ENCODE measurements at regions of chr12 and their contacts with region 1.

Region 1: DNA sequence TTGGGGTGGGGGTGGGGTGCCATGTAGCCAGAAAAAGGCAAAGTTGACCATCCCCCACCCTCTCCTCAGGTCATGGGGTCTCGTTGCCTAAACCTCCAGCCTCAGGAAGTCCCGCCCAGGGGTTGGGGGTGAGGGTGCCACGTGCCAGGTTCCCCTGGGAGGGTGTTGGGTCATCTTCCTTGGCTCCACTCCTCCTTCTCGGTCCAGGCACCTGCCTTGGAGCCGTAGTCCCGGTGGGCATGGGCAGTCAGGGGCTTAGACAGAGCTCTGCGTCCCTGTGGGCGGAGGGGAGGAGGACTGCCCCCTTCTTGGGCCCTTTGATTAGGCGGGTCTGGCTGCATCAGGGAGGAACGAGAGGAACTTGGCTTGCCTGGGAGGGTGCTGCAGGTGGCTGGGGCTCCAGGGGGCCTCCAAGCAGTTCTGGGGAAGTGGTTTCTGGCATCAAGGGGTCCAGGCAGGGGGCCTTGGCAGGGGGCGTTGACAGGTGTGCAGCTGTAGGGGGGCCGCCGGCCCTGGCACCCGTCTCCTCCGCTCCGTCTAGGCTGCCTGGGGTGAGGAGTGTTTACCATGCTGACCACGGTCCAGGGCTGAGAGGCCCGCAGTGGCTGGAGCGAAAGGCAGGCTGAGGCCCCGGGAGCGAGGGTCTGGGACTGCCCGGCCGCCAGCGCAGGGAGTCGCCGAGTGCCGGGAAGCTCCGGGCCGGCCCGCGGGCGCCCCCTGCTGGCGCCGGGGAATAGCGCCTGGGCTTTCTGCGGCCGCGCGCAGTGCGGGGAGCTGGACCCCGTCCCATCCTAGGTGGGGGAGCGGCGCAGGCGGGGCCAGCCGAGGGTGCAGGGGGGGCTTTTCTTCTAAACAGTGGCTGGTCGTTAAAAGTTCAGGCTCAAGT is 7.9 kb downstream of the SETD1B start:
- DNase-seq: peak; percentile 67 to 79
- ATAC-seq: peak; percentile 86 to 94 (median 90)
- H3K4me3 ChIP-seq: peak overlapping the region; percentile 31 to 68 (median 60)
- H3K27ac ChIP-seq: peak overlapping the region in 9 of 10 donors; percentile 38 to 82 (median 63)
- H3K4me1 ChIP-seq: peaks cover 18 to 56% (median 48%) of the 10 kb centered on the region in 9 donors
- H3K27me3 ChIP-seq: no peaks in the 10 kb centered on the region
- CTCF ChIP-seq: peak in 8 of 9 donors; percentile 97 to 99 (median 99)

Region 2: DNA sequence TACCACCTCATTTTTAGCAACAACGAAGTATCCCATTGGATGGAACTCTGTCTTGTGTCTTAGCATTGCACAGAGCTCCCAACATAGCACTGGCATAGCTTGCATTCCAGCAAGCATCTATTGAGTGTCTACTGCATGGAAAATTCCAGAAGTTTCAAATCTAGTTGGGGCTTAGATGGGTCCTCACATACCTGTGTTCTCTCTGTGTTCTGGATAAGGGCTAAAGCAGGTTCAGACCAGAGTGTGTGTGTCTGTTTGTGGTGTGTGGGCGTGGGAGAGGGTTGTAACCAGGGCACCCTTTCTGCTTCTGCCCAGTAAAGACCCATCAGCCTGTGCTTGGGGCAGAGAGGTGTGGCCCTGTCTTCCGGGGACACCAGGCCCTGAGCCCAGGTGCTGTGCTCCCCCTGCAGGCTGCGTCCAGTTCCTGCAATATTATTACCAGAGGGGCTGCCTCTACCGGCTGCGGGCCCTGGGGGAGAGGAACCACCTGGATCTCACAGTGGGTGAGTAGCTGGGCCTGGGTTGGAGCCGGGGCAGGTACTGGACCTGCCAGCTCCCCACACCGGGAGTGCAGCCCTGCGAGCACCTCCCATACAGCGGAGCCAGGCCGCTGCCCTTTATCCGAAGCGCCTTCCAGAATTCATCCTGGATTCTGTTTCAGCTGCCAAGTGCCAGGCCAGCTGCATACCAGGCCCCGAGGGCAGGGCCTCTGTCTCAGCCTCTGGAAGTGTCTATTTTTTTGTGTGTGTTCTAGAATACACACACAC is 38.5 kb before region 1 on chr12:
- intact Hi-C with region 1: loop called in 2 of 10 experiments (anchors 5 kb)
- DNase-seq: peak; percentile 64 to 70
- ATAC-seq: peak; percentile 56 to 78 (median 68)
- H3K4me3 ChIP-seq: peak overlapping the region in 1 of 10 donors; percentile 11
- H3K27ac ChIP-seq: peak overlapping the region in 9 of 10 donors; percentile 31 to 80 (median 72)
- H3K4me1 ChIP-seq: peaks cover 4 to 68% (median 29%) of the 10 kb centered on the region in 9 donors
- H3K27me3 ChIP-seq: no peaks in the 10 kb centered on the region
- CTCF ChIP-seq: peak; percentile 54 to 87 (median 79)

Region 3: GRCh38 chr12:121793838-121794533 is 17.7 kb before region 1 on chr12:
- intact Hi-C with region 1: loop called in 9 of 10 experiments (anchors 1 to 2 kb)
- DNase-seq: peak; percentile 90 to 92
- ATAC-seq: peak; percentile 60 to 79 (median 68)
- H3K4me3 ChIP-seq: peak overlapping the region; percentile 32 to 72 (median 58)
- H3K27ac ChIP-seq: peak overlapping the region in 9 of 10 donors; percentile 68 to 100 (median 100)
- H3K4me1 ChIP-seq: peaks cover 41 to 87% (median 76%) of the 10 kb centered on the region in 9 donors
- H3K27me3 ChIP-seq: no peaks in the 10 kb centered on the region
- CTCF ChIP-seq: peak; percentile 99 to 100 (median 100)

Region 4: GRCh38 chr12:121888478-121889266 is 77.0 kb after region 1 on chr12 and contains the start of gene PSMD9:
- intact Hi-C with region 1: loop called in 2 of 10 experiments (anchors 5 to 10 kb)
- DNase-seq: peak; percentile 98
- ATAC-seq: peak; percentile 99 to 100 (median 99)
- H3K4me3 ChIP-seq: peak within 1 kb of the TSS; percentile 62 to 99 (median 92)
- H3K27ac ChIP-seq: peak within 1 kb of the TSS; percentile 79 to 98 (median 96)
- H3K4me1 ChIP-seq: peaks cover 8 to 31% (median 24%) of the 10 kb centered on the region in 9 donors
- H3K27me3 ChIP-seq: no peaks in the 10 kb centered on the region
- CTCF ChIP-seq: peak; percentile 35 to 79 (median 66)
- total RNA-seq, gene PSMD9: 29.3 to 39.9 (median 34.4) TPM

Region 5: GRCh38 chr12:121894633-121895032 is 83.0 kb after region 1 on chr12:
- intact Hi-C with region 1: loop called in 2 of 10 experiments (anchors 5 to 10 kb)
- DNase-seq: no peak
- ATAC-seq: peak in 1 of 8 donors; percentile 37
- H3K4me3 ChIP-seq: no peak overlapping the region
- H3K27ac ChIP-seq: no peak overlapping the region
- H3K4me1 ChIP-seq: peaks cover 6 to 23% (median 19%) of the 10 kb centered on the region in 9 donors
- H3K27me3 ChIP-seq: no peaks in the 10 kb centered on the region
- CTCF ChIP-seq: peak in 2 of 9 donors; percentile 8 to 25

Measured in heart right ventricle (tissue), 16 donors.